Activated CD8-positive, alpha-beta T cell treated with anti-CD3 and anti-CD28 coated beads for 36 hours (primary cell): ENCODE measurements at regions of chr18 and their contacts with region 1.

Region 1: DNA sequence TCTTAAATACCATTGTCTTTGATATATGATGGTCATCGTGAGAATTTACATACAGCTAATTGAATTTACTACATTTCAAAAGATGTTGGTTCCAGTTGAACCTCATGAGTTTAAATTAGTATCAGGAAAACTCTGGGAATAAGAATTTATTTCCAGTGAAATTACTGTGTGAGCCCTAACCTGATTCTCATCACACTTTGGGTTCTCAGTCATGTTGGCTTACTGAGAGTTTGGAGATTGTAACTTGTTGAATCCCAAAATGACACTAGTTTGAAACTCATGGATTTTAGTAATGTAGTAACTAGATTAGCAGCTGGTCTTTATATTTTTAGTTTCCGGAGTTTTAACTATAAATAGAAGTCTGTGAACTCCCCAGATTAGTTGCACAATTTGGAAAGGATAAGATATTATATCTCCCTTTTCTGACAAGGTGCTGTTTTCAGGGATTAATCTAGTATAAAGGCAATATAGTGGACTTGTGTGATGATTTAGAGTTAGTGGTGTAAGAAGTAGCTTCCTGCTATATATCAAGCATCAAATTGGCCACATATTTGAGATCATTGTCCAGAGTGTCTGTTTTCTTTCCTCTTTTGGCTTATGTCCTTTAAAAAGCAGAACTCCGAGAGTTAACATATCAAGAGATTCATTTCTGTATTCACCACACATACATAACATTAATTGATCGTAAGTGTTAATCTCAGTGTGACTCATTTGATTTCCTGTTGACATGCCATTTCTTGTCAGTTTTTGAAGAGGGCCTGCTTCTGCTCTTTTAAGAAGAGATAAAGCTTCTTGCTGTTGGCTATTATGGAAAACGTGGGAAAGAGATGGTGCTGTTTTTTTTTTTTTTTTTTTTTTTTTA is 15.7 kb downstream of the NDUFV2 start:
- DNase-seq: no peak
- ATAC-seq: peak; percentile 45
- H3K4me3 Mint-ChIP-seq: peak overlapping the region; percentile 58
- H3K27ac Mint-ChIP-seq: peak overlapping the region; percentile 96
- H3K4me1 Mint-ChIP-seq: peaks cover 87% of the 10 kb centered on the region
- H3K27me3 Mint-ChIP-seq: no peaks in the 10 kb centered on the region
- CTCF ChIP-seq: no peak

Region 2: GRCh38 chr18:9066817-9067306 is 51.3 kb before region 1 on chr18:
- CTCF ChIA-PET with region 1: interaction called, 3 read pairs
- POLR2A ChIA-PET with region 1: interaction called, 11 read pairs
- intact Hi-C with region 1: no loop called
- DNase-seq: no peak
- ATAC-seq: peak; percentile 87
- H3K4me3 Mint-ChIP-seq: no peak overlapping the region
- H3K27ac Mint-ChIP-seq: peak overlapping the region; percentile 67
- H3K4me1 Mint-ChIP-seq: peaks cover 23% of the 10 kb centered on the region
- H3K27me3 Mint-ChIP-seq: no peaks in the 10 kb centered on the region
- CTCF ChIP-seq: no peak

Region 3: DNA sequence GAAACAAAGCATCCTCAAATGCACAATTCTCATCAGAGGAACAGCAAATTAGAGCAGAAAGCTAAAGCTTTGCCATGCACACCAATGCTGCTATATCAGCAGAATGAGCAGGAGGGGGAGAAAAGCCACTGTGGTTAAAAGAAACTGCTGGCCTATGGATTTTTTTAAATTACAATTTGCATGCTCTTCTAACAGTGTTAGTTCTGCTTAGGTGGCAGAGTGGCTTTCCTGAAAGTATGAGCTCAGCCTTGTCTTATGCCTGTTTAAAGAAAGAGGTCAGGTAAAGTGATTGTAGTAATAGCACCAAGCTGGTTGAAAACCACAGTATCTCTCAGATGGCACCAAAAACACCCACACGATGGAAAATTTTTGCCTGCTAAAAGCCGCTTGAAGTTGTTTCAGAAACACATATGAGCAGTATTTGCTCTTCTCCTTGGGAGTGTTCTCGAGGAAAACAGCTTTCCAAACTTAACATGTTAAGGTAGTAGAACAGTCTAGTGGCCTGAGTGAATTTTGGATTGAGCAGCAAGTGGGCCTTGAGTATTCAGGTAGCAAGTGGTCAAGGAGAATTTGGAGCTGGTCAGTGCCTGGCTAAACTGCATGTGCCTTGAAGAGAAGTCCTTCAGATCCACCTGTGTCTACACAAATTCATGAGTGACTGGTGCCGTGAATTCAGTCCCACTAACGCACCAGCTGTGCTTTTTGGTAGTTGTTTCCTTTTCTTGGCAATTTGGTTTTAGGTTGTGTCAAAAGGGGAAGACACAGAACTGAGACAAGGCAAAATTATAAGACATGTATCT is 35.3 kb before region 1 on chr18:
- CTCF ChIA-PET with region 1: interaction called, 11 read pairs
- POLR2A ChIA-PET with region 1: interaction called, 38 read pairs
- intact Hi-C with region 1: loop called (anchors 1 kb)
- DNase-seq: peak; percentile 85
- ATAC-seq: peak; percentile 86
- H3K4me3 Mint-ChIP-seq: peak overlapping the region; percentile 55
- H3K27ac Mint-ChIP-seq: peak overlapping the region; percentile 94
- H3K4me1 Mint-ChIP-seq: peaks cover 38% of the 10 kb centered on the region
- H3K27me3 Mint-ChIP-seq: no peaks in the 10 kb centered on the region
- CTCF ChIP-seq: no peak

Region 4: GRCh38 chr18:9088252-9088651 is 30.0 kb before region 1 on chr18:
- CTCF ChIA-PET with region 1: interaction called, 11 read pairs
- POLR2A ChIA-PET with region 1: interaction called, 38 read pairs
- intact Hi-C with region 1: no loop called
- DNase-seq: no peak
- ATAC-seq: no peak
- H3K4me3 Mint-ChIP-seq: peak overlapping the region; percentile 77
- H3K27ac Mint-ChIP-seq: peak overlapping the region; percentile 84
- H3K4me1 Mint-ChIP-seq: peaks cover 49% of the 10 kb centered on the region
- H3K27me3 Mint-ChIP-seq: no peaks in the 10 kb centered on the region
- CTCF ChIP-seq: no peak

Region 5: DNA sequence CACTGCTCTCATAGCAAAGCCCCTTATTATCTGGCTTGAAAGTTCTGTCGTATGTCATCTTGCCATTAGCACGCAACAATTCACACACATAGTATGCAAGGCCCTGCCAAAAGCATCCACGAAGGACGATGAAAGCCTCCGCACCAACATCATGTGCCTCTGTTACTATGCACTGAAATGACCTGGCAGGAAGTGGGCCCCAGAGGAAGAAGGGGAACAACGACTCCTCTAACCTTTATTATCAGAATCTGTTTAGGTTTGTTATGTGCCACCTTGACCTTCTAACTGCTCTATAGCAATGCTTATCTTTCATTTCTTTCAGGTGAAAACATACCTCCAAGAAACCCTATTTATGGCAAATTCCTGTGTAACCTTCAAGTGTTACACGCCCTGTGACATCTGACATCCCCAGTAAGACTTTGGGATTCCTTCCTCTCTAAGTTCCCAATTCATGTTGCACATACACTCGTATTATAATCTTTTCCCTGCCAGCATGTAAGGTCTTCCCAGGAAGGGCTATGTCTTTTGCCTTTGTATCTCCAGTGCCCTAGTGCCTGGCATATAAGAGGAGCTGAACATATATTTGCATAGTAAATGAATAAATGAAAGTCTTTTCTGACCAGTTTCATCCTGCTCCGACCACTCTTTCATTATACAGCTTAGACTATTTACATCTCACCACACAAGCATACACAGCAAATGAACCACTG is 22.8 kb before region 1 on chr18:
- CTCF ChIA-PET with region 1: interaction called, 7 read pairs
- POLR2A ChIA-PET with region 1: interaction called, 38 read pairs
- intact Hi-C with region 1: no loop called
- DNase-seq: peak; percentile 89
- ATAC-seq: peak; percentile 71
- H3K4me3 Mint-ChIP-seq: peak overlapping the region; percentile 51
- H3K27ac Mint-ChIP-seq: peak overlapping the region; percentile 96
- H3K4me1 Mint-ChIP-seq: peaks cover 56% of the 10 kb centered on the region
- H3K27me3 Mint-ChIP-seq: no peaks in the 10 kb centered on the region
- CTCF ChIP-seq: no peak

Region 6: DNA sequence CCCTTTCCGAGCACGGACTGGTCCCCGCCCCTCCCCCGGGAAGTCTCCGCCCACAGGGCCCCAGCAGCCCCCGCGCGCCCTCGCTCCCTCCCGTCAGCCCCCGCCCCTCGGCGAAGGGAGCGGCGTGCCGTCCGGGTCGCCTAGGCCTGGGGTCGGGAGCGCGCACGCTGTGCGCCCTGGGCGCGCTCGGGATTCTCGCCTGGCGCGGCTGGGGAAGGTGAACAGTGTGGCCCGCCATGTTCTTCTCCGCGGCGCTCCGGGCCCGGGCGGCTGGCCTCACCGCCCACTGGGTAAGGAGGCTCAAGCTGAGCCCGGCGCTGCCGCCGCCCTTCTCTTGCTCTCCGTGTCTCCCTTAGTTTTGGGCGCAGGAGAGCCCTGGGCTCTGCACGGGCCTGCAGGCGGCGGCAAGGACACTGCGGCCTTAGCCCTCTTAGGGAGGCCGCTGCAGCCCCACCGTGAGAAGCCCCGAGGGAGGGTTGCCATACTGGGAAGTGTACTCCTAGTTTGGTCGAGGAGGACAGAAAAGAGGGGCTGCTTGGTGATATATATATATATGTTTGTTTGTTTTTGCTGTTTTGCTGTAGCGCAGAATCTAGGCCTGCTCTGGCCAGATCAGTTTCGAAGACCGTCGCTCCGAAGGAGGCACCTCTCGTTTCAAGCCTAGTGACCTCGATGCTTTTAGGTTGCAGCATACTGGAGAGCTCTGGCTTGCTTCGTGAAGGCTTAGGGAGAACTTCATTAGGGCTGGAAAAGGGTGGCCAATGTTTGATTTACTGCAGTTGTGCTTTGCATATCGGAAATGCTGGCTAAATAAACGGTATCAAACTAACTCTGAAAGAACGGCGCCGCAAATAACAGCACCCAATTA is 15.5 kb before region 1 on chr18 and contains the start of gene NDUFV2:
- CTCF ChIA-PET with region 1: interaction called, 8 read pairs
- POLR2A ChIA-PET with region 1: interaction called, 116 read pairs
- intact Hi-C with region 1: no loop called
- DNase-seq: peak; percentile 98
- ATAC-seq: peak; percentile 95
- H3K4me3 Mint-ChIP-seq: peak within 1 kb of the TSS; percentile 86
- H3K27ac Mint-ChIP-seq: peak within 1 kb of the TSS; percentile 97
- H3K4me1 Mint-ChIP-seq: peaks cover 43% of the 10 kb centered on the region
- H3K27me3 Mint-ChIP-seq: no peaks in the 10 kb centered on the region
- CTCF ChIP-seq: no peak
- total RNA-seq, gene NDUFV2: 324 to 332 TPM